ENCODE measurements at regions of chr9 and their contacts with region 1.

Region 1: GRCh38 chr9:15211160-15211814 is 95.7 kb downstream of the TTC39B start:
- DNase-seq: no peak
- H3K4me3 ChIP-seq: no peak overlapping the region
- H3K27ac ChIP-seq: peak overlapping the region; percentile 33
- H3K4me1 ChIP-seq: peaks cover 11% of the 10 kb centered on the region
- H3K27me3 ChIP-seq: no peaks in the 10 kb centered on the region
- CTCF ChIP-seq: peak; percentile 95

Region 2: GRCh38 chr9:14967450-14968321 is 243.6 kb before region 1 on chr9:
- intact Hi-C with region 1: no loop called
- DNase-seq: no peak
- H3K4me3 ChIP-seq: no peak overlapping the region
- H3K27ac ChIP-seq: no peak overlapping the region
- H3K4me1 ChIP-seq: no peaks in the 10 kb centered on the region
- H3K27me3 ChIP-seq: no peaks in the 10 kb centered on the region
- CTCF ChIP-seq: no peak

Region 3: GRCh38 chr9:15317836-15318235 is 106.5 kb after region 1 on chr9:
- intact Hi-C with region 1: loop called (anchors 10 kb)
- DNase-seq: no peak
- H3K4me3 ChIP-seq: no peak overlapping the region
- H3K27ac ChIP-seq: no peak overlapping the region
- H3K4me1 ChIP-seq: no peaks in the 10 kb centered on the region
- H3K27me3 ChIP-seq: no peaks in the 10 kb centered on the region
- CTCF ChIP-seq: no peak

Measured in left ventricle myocardium inferior (tissue), 1 donor.